ENCODE measurements at regions of chr3 and their contacts with region 1.

Region 1: DNA sequence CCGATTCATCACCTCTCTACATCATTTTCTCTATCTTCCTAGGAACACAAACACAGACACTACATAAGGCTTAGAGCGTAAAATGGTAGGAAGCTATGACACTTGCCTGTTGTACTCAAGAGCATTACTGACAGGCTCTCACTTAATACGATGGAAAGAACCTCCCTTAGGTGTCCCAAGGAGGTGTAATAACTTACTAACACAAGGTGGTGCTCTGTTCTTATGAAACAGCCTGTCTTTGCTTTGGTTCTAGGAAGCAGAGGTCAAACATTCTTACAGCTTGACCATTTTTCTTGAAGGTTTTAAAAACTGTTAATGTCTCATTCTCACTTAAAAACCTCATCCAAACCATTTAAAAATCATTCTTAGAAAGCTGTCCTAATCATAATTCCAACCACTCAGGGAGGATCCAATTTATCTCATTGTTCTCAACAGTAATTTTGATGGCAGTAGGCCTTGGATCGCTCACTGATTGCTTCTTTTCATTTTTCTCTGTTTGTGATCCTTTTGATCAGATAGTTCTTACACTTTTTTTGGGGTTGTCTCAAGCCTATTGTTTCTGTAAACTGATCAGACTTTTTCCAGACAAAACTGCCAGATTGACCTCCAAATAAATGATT is 317.8 kb upstream of the AGTR1 start:
- DNase-seq: no peak
- ATAC-seq: peak in 3 of 4 donors; percentile 39 to 70 (median 45)
- H3K4me3 ChIP-seq: no peak overlapping the region
- H3K27ac ChIP-seq: no peak overlapping the region
- H3K4me1 ChIP-seq: no peaks in the 10 kb centered on the region
- H3K27me3 ChIP-seq: no peaks in the 10 kb centered on the region
- CTCF ChIP-seq: peak in 11 of 12 donors; percentile 19 to 56 (median 25)
- POLR2A ChIP-seq: no peak

Region 2: GRCh38 chr3:148718982-148719862 is 339.3 kb after region 1 on chr3:
- intact Hi-C with region 1: loop called in 8 of 10 experiments (anchors 2 to 10 kb)
- DNase-seq: no peak
- ATAC-seq: no peak
- H3K4me3 ChIP-seq: no peak overlapping the region
- H3K27ac ChIP-seq: no peak overlapping the region
- H3K4me1 ChIP-seq: no peaks in the 10 kb centered on the region
- H3K27me3 ChIP-seq: no peaks in the 10 kb centered on the region
- CTCF ChIP-seq: peak in 10 of 12 donors; percentile 19 to 54 (median 36)
- POLR2A ChIP-seq: no peak

Region 3: GRCh38 chr3:148727247-148727646 is 347.4 kb after region 1 on chr3:
- intact Hi-C with region 1: loop called in 2 of 10 experiments (anchors 5 to 10 kb)
- DNase-seq: peak in 2 of 5 donors; percentile 9 to 13
- ATAC-seq: no peak
- H3K4me3 ChIP-seq: no peak overlapping the region
- H3K27ac ChIP-seq: no peak overlapping the region
- H3K4me1 ChIP-seq: peaks cover 0 to 6% (median 0%) of the 10 kb centered on the region in 12 donors
- H3K27me3 ChIP-seq: no peaks in the 10 kb centered on the region
- CTCF ChIP-seq: peak in 3 of 12 donors; percentile 23 to 31 (median 25)
- POLR2A ChIP-seq: no peak

Region 4: DNA sequence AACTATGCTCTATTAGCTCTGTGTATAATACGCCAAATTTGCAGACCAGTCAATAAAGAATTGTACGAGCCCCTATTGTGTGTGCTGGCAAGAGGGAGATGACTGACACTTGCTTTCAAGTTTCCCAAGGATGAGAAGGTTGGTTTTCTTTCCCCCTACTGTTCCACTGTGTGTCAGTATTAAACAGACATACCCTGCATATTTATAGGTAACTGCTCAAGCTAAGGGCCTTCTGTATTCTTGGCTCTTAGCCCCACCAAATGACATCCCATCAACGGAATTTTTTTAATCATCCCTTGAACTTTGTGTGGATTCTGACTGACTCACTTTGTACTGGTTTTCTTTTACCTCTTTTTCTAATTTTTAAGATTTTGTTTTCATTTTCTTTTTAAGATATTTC is 550.9 kb after region 1 on chr3:
- intact Hi-C with region 1: loop called in 1 of 10 experiments (anchors 10 kb)
- DNase-seq: no peak
- ATAC-seq: no peak
- H3K4me3 ChIP-seq: no peak overlapping the region
- H3K27ac ChIP-seq: no peak overlapping the region
- H3K4me1 ChIP-seq: no peaks in the 10 kb centered on the region
- H3K27me3 ChIP-seq: no peaks in the 10 kb centered on the region
- CTCF ChIP-seq: no peak
- POLR2A ChIP-seq: no peak

Region 5: DNA sequence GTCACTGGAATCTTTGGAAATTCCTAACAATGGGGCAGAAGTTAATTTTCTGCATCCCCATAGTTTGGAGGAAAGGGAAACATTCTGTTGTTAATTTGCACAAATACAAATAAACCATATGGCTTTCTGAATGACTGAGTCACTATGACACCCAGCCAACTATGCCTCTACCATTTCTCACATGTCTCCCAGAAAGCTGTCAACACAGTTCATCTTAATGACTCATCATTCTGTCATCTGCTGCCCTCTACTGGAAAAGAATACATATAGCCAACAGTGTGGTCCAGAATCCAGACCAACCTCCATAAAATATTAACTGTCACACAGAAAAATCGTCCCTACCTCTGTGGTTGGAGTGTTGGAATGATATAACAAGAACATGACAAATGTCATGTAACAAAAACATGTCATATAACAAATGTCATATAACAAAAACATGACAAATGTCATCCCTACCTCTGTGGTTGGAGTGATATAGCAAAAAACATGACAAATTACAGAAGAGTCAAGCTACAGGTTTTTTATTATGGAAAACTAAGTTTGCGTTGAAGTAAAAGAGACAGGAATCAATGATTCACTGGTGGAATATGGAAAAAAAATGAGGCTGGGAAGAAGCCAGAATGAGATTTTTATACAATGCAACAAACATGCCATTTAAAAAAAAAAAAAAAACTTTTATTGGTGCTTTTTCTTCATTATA is 563.8 kb after region 1 on chr3:
- intact Hi-C with region 1: loop called in 6 of 10 experiments (anchors 5 to 10 kb)
- DNase-seq: peak in 1 of 5 donors; percentile 21
- ATAC-seq: peak; percentile 70 to 93 (median 88)
- H3K4me3 ChIP-seq: no peak overlapping the region
- H3K27ac ChIP-seq: no peak overlapping the region
- H3K4me1 ChIP-seq: peaks cover 0 to 6% (median 0%) of the 10 kb centered on the region in 12 donors
- H3K27me3 ChIP-seq: no peaks in the 10 kb centered on the region
- CTCF ChIP-seq: peak; percentile 51 to 81 (median 66)
- POLR2A ChIP-seq: no peak

Measured in heart left ventricle (tissue), 16 donors.